ENCODE measurements at regions of chr6 and their contacts with region 1.

Region 1: DNA sequence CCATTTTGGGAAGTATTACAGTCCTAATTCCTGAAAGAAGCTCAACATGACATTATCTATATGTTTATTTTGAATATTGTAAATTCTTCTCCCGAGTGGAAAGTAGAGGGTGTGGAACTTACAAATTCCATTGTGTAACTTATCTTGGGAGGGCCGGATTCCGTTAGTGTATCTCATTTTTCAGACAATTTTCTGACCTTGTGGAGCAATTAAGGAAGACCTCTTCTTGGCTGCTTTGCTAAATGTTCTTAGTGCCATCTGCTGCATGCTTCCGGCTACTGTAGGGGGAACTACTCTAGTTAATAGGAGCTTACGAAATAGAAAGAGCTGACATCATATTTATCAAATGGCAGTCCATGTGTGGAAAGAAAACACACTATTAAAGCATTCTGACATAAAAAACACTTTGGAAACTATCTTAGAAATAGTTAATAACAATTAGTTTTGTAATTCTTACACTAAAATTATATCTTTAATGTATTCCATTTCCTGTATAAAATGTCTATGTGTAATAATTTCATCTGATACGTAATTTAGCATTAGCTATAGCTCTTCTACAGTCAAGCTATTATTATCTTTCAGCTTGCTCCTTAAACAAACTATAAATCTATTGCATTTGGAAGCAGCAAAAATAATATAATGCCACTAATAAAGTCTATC is 41.5 kb upstream of the KCNQ5 start:
- DNase-seq: peak; percentile 23
- ATAC-seq: peak; percentile 82
- H3K4me3 Mint-ChIP-seq: no peak overlapping the region
- H3K27ac Mint-ChIP-seq: no peak overlapping the region
- H3K4me1 Mint-ChIP-seq: no peaks in the 10 kb centered on the region
- H3K27me3 Mint-ChIP-seq: no peaks in the 10 kb centered on the region
- CTCF ChIP-seq: peak; percentile 20; the same call in 1 of the 2 replicates

Region 2: DNA sequence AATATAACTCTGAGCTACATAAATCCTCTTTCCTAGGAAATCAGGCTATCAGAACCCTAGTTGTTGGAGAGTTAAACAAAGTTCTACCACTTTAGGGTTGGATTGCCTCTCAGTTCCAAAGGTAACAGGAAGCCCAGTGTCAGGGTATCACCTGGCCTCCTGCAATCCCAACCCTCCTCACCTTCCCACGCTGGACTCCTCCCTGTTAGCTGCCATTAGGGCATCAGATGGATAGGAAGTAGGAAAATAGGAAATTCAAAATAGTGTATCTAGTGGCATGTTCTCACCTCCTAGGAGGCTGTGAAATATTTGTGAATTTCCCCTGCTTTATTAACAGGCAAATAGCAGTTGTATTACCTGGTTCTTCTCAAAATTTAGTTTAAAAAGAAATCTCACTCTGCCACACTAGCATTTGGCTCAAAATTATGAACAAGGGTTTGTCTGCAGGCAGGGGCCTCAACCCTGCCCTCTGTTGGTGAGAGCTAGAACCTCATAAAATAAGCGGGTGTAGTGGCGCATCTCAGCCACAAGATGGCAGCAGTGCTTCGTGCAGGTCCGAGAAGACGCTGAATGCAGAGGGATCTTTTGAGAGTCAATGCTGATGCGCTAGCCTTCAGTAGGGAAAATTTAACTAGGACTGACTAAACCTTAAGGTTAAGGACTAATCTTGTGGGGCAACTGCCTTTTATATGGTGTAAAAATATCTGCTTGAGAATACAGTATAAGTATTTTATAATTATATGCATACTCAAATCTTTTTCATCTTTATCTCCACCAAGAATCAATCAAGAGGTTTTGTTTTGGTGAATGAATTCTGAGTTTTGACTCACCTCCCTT is 168.3 kb before region 1 on chr6:
- CTCF ChIA-PET with region 1: interaction called, 105 read pairs
- POLR2A ChIA-PET with region 1: interaction called, 3 read pairs
- DNase-seq: peak; percentile 61
- ATAC-seq: peak; percentile 83
- H3K4me3 Mint-ChIP-seq: no peak overlapping the region
- H3K27ac Mint-ChIP-seq: peak overlapping the region; percentile 32; the same call in 1 of the 2 replicates
- H3K4me1 Mint-ChIP-seq: peaks cover 5% of the 10 kb centered on the region
- H3K27me3 Mint-ChIP-seq: no peaks in the 10 kb centered on the region
- CTCF ChIP-seq: peak; percentile 100

Region 3: DNA sequence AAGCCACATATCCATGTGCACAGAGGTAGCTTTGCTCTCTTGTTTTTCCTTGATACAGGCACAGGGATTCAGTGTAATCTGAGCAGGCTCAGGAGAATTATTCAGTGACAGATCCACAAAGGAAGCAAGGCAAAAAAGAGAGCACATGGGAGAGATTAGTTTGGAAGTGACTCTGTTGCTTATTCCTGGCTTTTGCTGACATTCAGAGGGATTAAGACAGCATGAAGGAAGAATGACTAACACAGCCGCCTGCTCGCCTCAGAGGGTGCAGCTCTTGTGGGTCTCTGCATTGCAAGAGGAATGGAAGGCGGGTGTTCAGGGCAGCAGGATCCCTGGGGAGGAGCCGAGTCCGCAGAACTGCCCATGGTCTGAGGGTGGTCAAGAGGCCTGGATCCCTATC is 161.9 kb before region 1 on chr6:
- CTCF ChIA-PET with region 1: interaction called, 105 read pairs
- POLR2A ChIA-PET with region 1: no interaction called
- DNase-seq: no peak
- ATAC-seq: 0 out of 2 replicates have a peak, but pooled peaks have one; percentile 25
- H3K4me3 Mint-ChIP-seq: no peak overlapping the region
- H3K27ac Mint-ChIP-seq: no peak overlapping the region
- H3K4me1 Mint-ChIP-seq: peaks cover 30% of the 10 kb centered on the region
- H3K27me3 Mint-ChIP-seq: no peaks in the 10 kb centered on the region
- CTCF ChIP-seq: no peak

Region 4: DNA sequence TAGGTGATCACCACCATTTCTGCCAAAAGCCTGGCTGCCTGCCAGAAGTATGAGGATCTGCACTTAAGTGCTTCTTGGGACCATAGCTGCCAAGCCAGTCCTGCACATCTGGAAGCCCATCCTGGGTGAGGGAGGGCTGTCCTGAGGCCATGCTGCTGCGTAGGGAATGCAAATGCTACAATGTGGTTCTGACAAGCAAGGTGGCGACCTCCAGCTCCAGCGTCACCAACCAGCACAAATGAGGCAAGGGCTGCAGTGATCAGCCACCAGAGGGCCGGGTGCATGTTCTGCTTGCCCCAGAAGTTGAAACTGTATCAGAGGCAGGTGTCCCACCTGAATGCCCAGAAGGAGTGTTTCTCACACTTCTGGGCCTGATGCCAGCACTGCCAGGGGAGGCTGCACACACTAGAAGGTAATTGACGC is 57.7 kb before region 1 on chr6:
- CTCF ChIA-PET with region 1: interaction called, 28 read pairs
- POLR2A ChIA-PET with region 1: no interaction called
- DNase-seq: peak; percentile 66
- ATAC-seq: peak; percentile 100
- H3K4me3 Mint-ChIP-seq: no peak overlapping the region
- H3K27ac Mint-ChIP-seq: no peak overlapping the region; the same call in 1 of the 2 replicates
- H3K4me1 Mint-ChIP-seq: no peaks in the 10 kb centered on the region
- H3K27me3 Mint-ChIP-seq: no peaks in the 10 kb centered on the region
- CTCF ChIP-seq: peak; percentile 31; the same call in 1 of the 2 replicates